Lower leg skin (tissue), 4 donors: ENCODE measurements at regions of chr1 and their contacts with region 1.

Region 1: GRCh38 chr1:170395149-170395548 is 136.8 kb upstream of the GORAB start:
- DNase-seq: no peak
- H3K4me3 ChIP-seq: no peak overlapping the region
- CTCF ChIP-seq: no peak
- POLR2A ChIP-seq: no peak

Region 2: GRCh38 chr1:169595764-169596711 is 799.1 kb before region 1 on chr1:
- intact Hi-C with region 1: loop called (anchors 5 kb)
- DNase-seq: no peak
- H3K4me3 ChIP-seq: no peak overlapping the region
- CTCF ChIP-seq: no peak
- POLR2A ChIP-seq: no peak

Region 3: GRCh38 chr1:169999331-169999741 is 395.8 kb before region 1 on chr1:
- intact Hi-C with region 1: no loop called
- DNase-seq: no peak
- H3K4me3 ChIP-seq: no peak overlapping the region
- CTCF ChIP-seq: no peak
- POLR2A ChIP-seq: no peak